Spleen (tissue), 13 donors: ENCODE measurements at regions of chr4 and their contacts with region 1.

Region 1: GRCh38 chr4:123649645-123650391 is 253.2 kb downstream of the SPRY1 start:
- DNase-seq: no peak
- H3K4me3 ChIP-seq: no peak overlapping the region
- H3K27ac ChIP-seq: no peak overlapping the region
- H3K4me1 ChIP-seq: peaks cover 0 to 10% (median 0%) of the 10 kb centered on the region in 6 donors
- H3K27me3 ChIP-seq: no peaks in the 10 kb centered on the region
- CTCF ChIP-seq: no peak
- POLR2A ChIP-seq: no peak

Region 2: GRCh38 chr4:123396307-123397143 is 253.3 kb before region 1 on chr4 and contains the start of gene SPRY1:
- intact Hi-C with region 1: loop called (anchors 10 kb)
- DNase-seq: peak; percentile 90
- H3K4me3 ChIP-seq: peak within 1 kb of the TSS; percentile 52 to 89 (median 66)
- H3K27ac ChIP-seq: peak within 1 kb of the TSS; percentile 74 to 90 (median 88)
- H3K4me1 ChIP-seq: peaks cover 0 to 54% (median 33%) of the 10 kb centered on the region in 6 donors
- H3K27me3 ChIP-seq: peaks cover 0 to 33% (median 6%) of the 10 kb centered on the region in 7 donors
- CTCF ChIP-seq: no peak
- POLR2A ChIP-seq: peak in 1 of 3 donors; percentile 72
- total RNA-seq, gene SPRY1: 21.0 to 71.3 (median 36.5) TPM